Colonic mucosa (tissue), 4 donors: ENCODE measurements at regions of chr4 and their contacts with region 1.

Region 1: GRCh38 chr4:74376888-74377483 is 12.0 kb downstream of the EREG start:
- DNase-seq: no peak
- H3K4me3 ChIP-seq: no peak overlapping the region
- H3K27ac ChIP-seq: peak overlapping the region; percentile 81
- H3K4me1 ChIP-seq: no peaks in the 10 kb centered on the region
- H3K27me3 ChIP-seq: no peaks in the 10 kb centered on the region
- CTCF ChIP-seq: peak; percentile 44

Region 2: DNA sequence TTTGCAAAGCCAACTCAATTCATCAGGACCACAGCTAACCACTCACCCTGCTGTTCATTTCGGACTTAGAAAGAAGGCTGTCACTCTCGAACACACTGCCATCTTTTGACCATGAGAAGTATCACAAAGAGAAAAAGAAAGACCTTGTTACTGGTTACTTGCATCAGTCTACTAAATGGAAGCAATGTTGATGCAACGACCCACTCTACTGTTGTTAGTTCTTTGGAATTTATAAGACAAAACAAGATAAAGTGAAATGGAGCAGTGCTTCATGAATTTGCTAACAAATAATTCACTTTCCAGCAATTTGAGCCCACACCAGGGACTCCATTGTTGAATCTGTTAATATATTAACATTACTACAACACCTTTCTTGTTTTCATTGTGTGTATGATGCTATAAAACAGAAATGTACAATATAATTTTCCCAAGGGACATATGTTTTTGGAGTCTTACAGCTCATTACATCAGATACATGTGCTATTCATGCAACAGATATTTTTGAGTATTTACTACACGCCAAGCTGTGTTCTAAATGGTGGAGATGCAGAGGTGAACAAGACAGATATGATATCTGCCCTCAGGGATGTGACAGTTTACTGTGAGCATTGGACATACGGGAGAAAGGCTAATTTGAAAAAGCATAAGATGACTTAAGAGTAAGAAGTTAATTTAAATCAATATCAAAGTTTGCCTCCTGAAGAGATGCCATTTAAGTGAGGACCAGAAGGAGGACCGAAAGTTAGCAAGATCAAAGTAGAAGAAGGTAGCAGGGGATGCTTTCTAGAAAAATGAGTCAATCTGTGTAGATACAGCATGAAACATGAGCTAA is 155.2 kb after region 1 on chr4:
- intact Hi-C with region 1: loop called (anchors 2 kb)
- DNase-seq: peak; percentile 31
- H3K4me3 ChIP-seq: no peak overlapping the region
- H3K27ac ChIP-seq: no peak overlapping the region
- H3K4me1 ChIP-seq: no peaks in the 10 kb centered on the region
- H3K27me3 ChIP-seq: no peaks in the 10 kb centered on the region
- CTCF ChIP-seq: peak; percentile 50

Region 3: DNA sequence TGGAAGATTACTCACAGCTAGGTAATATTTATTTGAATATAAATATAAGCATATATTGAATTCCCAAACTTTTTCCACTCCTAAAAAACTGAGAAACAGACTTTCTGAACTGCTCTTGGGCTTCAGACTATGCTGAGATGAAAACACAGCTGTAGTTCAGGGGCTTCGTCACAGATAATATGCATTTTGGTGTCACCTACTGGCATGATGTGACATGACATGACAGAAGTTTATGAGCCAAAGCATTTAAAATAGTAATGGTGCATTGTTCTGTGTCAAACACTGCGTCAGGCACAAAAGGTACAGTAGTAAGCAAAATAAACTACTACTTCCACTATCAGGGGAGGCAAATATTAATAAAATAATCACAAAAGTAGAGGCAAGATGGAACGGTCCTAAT is 246.1 kb after region 1 on chr4:
- intact Hi-C with region 1: loop called (anchors 5 kb)
- DNase-seq: peak; percentile 47
- H3K4me3 ChIP-seq: no peak overlapping the region
- H3K27ac ChIP-seq: no peak overlapping the region
- H3K4me1 ChIP-seq: no peaks in the 10 kb centered on the region
- H3K27me3 ChIP-seq: no peaks in the 10 kb centered on the region
- CTCF ChIP-seq: peak; percentile 33